Prostate gland (tissue), 2 donors: ENCODE measurements at regions of chr7 and their contacts with region 1.

Region 1: DNA sequence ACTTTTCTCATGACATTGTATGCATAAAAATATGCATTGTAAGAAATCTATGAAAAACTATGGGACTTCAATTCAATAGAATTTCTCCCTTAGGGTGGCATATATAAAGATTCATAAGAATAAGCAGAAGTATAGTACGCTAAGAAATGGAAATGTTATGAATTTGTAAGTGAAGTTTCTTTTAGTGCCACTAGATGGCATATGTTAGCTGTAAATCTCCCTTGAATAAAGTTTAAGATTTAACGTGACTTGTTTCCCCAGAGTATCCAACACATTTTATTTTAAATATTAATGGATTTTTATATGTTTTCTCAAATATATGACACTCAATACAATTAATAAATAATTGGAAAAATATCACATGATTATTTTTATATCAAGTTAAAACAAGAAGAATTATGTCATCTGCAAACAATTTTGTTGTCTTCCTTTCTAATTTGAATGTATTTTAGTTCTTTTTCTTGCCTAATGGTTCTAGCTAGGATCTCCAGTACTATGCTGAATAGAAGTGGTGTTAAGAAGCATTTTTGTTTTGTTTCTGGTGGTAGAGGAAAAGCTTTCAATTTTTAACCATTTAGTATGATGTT is 287.2 kb downstream of the HGF start:
- DNase-seq: no peak
- H3K4me3 ChIP-seq: no peak overlapping the region
- H3K27ac ChIP-seq: no peak overlapping the region
- H3K4me1 ChIP-seq: no peaks in the 10 kb centered on the region
- H3K27me3 ChIP-seq: no peaks in the 10 kb centered on the region
- CTCF ChIP-seq: peak in 3 of 4 experiments; percentile 65
- POLR2A ChIP-seq: no peak

Region 2: DNA sequence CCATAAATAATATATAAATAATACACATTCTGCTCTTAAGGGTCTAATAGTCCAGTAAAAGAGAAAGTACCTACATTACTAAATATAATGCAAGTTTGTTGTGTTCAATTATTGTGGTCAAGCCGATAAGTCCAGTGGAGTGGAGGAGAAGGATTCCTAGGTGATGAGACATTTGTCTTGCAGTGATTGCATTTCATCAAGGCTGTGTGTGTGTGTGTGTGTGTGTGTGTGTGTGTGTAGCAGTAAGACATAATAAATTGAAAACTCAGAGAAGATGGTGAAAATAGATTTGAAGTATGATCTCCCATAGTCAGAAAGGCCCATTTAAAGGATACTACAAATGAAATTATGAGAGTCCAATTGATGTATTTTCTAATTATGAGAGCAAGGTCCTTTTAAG is 371.3 kb before region 1 on chr7:
- intact Hi-C with region 1: no loop called
- DNase-seq: no peak
- H3K4me3 ChIP-seq: no peak overlapping the region
- H3K27ac ChIP-seq: no peak overlapping the region
- H3K4me1 ChIP-seq: no peaks in the 10 kb centered on the region
- H3K27me3 ChIP-seq: no peaks in the 10 kb centered on the region
- CTCF ChIP-seq: no peak
- POLR2A ChIP-seq: no peak

Region 3: GRCh38 chr7:81956520-81956919 is 473.8 kb after region 1 on chr7:
- intact Hi-C with region 1: loop called (anchors 10 kb)
- DNase-seq: no peak
- H3K4me3 ChIP-seq: no peak overlapping the region
- H3K27ac ChIP-seq: no peak overlapping the region
- H3K4me1 ChIP-seq: no peaks in the 10 kb centered on the region
- H3K27me3 ChIP-seq: no peaks in the 10 kb centered on the region
- CTCF ChIP-seq: peak in 2 of 4 experiments; percentile 8 to 35
- POLR2A ChIP-seq: no peak

Region 4: GRCh38 chr7:82019551-82020475 is 537.1 kb after region 1 on chr7:
- intact Hi-C with region 1: loop called (anchors 5 kb)
- DNase-seq: no peak
- H3K4me3 ChIP-seq: no peak overlapping the region
- H3K27ac ChIP-seq: no peak overlapping the region
- H3K4me1 ChIP-seq: no peaks in the 10 kb centered on the region
- H3K27me3 ChIP-seq: no peaks in the 10 kb centered on the region
- CTCF ChIP-seq: no peak
- POLR2A ChIP-seq: no peak

Region 5: DNA sequence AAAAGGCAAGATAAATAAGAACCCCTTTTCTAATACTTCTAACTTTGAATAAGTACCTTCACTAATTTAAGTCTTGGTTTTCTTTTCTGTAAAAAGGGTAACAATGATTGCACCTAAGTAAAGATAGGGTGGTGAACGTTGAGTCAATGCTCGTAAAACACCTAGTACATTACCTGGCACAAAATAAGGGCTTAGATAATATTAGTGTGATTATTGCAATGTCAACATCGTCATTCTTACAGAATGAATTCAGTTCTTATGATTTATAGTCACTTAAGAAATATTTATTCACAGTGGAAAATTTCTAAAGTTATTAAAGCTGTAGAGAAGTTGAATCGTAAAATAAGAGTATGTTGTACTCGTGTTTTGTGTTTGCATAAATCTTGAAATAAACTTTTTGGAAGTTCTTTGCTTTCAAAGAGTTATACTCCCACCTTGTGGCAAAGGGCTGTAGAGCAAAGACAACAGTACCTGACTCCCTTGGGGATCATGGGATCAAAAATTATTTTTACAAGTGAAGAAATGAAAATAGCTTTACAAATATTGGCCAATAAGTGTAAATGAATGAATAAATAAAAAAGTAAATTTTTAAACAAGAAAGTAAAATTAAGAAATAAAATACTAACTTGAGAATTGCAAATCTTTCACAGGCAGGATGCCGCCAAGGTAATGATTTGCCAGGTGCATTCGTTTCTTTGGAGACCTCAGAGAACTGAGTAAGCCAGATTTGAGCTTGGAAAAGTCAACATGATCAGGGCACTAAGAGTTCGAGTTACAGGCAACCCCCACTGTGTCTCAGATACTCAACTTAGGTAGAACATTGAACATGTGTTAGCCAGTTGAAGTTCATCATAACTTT is 1246.7 kb after region 1 on chr7:
- intact Hi-C with region 1: loop called (anchors 10 kb)
- DNase-seq: peak; percentile 12
- H3K4me3 ChIP-seq: no peak overlapping the region
- H3K27ac ChIP-seq: no peak overlapping the region
- H3K4me1 ChIP-seq: no peaks in the 10 kb centered on the region
- H3K27me3 ChIP-seq: no peaks in the 10 kb centered on the region
- CTCF ChIP-seq: peak in 3 of 4 experiments; percentile 37 to 68 (median 66)
- POLR2A ChIP-seq: no peak